Endothelial cell of umbilical vein (primary cell): ENCODE measurements at regions of chr2 and their contacts with region 1.

Region 1: DNA sequence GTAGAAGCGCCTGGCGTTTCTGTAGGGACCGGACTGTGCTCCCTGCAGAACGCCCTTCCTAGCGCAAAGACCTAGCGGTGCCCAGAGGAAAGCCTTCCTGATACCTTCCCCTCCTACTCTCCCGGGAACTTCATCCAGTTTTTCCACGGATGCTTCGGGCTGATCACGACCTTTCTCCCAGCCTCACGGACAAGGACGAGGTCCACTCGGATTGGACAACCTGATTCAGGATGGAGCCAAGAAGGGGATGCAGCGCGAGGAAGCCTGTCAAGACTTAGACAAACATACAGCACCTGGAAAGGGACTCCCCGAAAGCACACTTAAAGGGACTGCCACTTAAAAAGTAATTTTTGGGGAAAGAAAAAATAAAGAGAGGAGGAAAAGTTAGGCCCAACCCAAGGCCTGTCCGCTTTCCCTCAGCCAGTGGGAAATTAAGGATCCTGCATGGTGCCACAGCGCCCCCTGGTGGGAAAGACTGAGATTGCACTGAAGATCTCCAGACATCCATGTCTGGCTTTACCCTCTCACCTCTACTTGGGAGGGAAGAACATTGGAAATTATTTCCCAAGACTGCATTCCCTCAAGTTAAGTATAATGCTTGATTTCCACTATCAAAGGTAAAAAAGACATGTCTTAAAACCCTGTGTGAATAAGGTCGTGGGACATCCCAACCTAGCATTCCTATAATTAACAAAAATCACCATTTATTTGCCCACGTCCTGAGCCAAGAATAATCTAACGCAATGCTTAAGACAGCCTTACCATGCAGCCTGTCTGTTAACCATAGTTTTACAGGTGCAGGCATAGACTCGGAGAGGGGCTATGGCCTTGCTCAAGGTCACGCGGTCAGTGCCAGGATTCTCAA is 13.4 kb upstream of the COPS8 start:
- DNase-seq: peak; percentile 72
- H3K4me3 ChIP-seq: no peak overlapping the region
- H3K27ac ChIP-seq: no peak overlapping the region
- H3K4me1 ChIP-seq: peaks cover 38% of the 10 kb centered on the region
- H3K27me3 ChIP-seq: no peaks in the 10 kb centered on the region
- CTCF ChIP-seq: peak; percentile 88
- POLR2A ChIP-seq: no peak

Region 2: GRCh38 chr2:236309669-236310029 is 762.6 kb before region 1 on chr2:
- CTCF ChIA-PET with region 1: interaction called, 20 read pairs
- POLR2A ChIA-PET with region 1: no interaction called
- dilution Hi-C with region 1: no loop called
- intact Hi-C with region 1: loop called (anchors 1 kb)
- DNase-seq: peak; percentile 39
- H3K4me3 ChIP-seq: no peak overlapping the region
- H3K27ac ChIP-seq: no peak overlapping the region
- H3K4me1 ChIP-seq: no peaks in the 10 kb centered on the region
- H3K27me3 ChIP-seq: no peaks in the 10 kb centered on the region
- CTCF ChIP-seq: peak; percentile 61 to 76
- POLR2A ChIP-seq: no peak

Region 3: GRCh38 chr2:236343400-236344161 is 728.7 kb before region 1 on chr2:
- CTCF ChIA-PET with region 1: interaction called, 16 read pairs
- POLR2A ChIA-PET with region 1: no interaction called
- dilution Hi-C with region 1: loop called (anchors 10 kb)
- intact Hi-C with region 1: loop called (anchors 1 kb)
- DNase-seq: peak; percentile 65
- H3K4me3 ChIP-seq: no peak overlapping the region
- H3K27ac ChIP-seq: no peak overlapping the region
- H3K4me1 ChIP-seq: no peaks in the 10 kb centered on the region
- H3K27me3 ChIP-seq: no peaks in the 10 kb centered on the region
- CTCF ChIP-seq: peak; percentile 72 to 78
- POLR2A ChIP-seq: no peak

Region 4: GRCh38 chr2:236352761-236353593 is 719.3 kb before region 1 on chr2:
- CTCF ChIA-PET with region 1: interaction called, 19 read pairs
- POLR2A ChIA-PET with region 1: no interaction called
- dilution Hi-C with region 1: loop called (anchors 10 kb)
- intact Hi-C with region 1: loop called (anchors 1 kb)
- DNase-seq: peak; percentile 44
- H3K4me3 ChIP-seq: no peak overlapping the region
- H3K27ac ChIP-seq: no peak overlapping the region
- H3K4me1 ChIP-seq: no peaks in the 10 kb centered on the region
- H3K27me3 ChIP-seq: no peaks in the 10 kb centered on the region
- CTCF ChIP-seq: peak; percentile 60 to 61
- POLR2A ChIP-seq: no peak

Region 5: GRCh38 chr2:236512902-236513435 is 559.3 kb before region 1 on chr2:
- CTCF ChIA-PET with region 1: interaction called, 17 read pairs
- POLR2A ChIA-PET with region 1: no interaction called
- dilution Hi-C with region 1: no loop called
- intact Hi-C with region 1: no loop called
- DNase-seq: peak; percentile 42
- H3K4me3 ChIP-seq: no peak overlapping the region
- H3K27ac ChIP-seq: no peak overlapping the region
- H3K4me1 ChIP-seq: peaks cover 18% of the 10 kb centered on the region
- H3K27me3 ChIP-seq: no peaks in the 10 kb centered on the region
- CTCF ChIP-seq: peak; percentile 77 to 78
- POLR2A ChIP-seq: no peak

Region 6: DNA sequence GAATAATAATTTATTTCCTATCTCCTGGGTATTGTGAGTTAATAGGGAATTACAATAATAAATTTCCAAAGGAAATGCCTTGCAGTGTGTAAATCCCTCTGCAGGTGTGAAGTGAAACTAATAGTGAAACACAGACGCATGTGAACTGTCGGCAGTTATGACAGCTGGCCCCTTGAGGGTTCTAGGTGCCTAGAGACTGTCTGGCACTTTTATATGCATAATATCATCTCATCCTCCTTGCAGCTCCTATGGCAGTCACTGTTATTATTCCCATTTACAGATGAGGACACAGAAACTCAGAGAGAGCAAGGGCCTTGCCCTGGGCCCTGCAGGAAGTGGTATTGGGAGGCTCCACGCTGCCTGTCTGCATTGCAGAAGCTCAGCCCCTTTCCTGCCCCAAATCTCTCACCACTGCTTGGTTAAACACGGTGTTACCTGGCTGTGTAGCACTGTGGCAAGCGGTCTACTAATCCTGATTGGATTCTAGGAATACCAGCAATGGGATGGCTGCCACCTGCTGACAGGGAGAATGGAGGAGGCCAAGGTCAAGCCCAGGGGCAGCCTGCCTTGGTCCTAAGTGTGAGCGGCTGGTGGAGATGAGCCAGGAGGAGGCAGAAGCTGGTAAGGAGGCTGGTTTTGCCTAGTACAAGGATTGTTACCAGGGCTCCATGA is 535.4 kb before region 1 on chr2:
- CTCF ChIA-PET with region 1: no interaction called
- POLR2A ChIA-PET with region 1: no interaction called
- dilution Hi-C with region 1: no loop called
- intact Hi-C with region 1: loop called (anchors 1 kb)
- DNase-seq: no peak
- H3K4me3 ChIP-seq: no peak overlapping the region
- H3K27ac ChIP-seq: no peak overlapping the region
- H3K4me1 ChIP-seq: peaks cover 12% of the 10 kb centered on the region
- H3K27me3 ChIP-seq: no peaks in the 10 kb centered on the region
- CTCF ChIP-seq: no peak
- POLR2A ChIP-seq: no peak

Region 7: DNA sequence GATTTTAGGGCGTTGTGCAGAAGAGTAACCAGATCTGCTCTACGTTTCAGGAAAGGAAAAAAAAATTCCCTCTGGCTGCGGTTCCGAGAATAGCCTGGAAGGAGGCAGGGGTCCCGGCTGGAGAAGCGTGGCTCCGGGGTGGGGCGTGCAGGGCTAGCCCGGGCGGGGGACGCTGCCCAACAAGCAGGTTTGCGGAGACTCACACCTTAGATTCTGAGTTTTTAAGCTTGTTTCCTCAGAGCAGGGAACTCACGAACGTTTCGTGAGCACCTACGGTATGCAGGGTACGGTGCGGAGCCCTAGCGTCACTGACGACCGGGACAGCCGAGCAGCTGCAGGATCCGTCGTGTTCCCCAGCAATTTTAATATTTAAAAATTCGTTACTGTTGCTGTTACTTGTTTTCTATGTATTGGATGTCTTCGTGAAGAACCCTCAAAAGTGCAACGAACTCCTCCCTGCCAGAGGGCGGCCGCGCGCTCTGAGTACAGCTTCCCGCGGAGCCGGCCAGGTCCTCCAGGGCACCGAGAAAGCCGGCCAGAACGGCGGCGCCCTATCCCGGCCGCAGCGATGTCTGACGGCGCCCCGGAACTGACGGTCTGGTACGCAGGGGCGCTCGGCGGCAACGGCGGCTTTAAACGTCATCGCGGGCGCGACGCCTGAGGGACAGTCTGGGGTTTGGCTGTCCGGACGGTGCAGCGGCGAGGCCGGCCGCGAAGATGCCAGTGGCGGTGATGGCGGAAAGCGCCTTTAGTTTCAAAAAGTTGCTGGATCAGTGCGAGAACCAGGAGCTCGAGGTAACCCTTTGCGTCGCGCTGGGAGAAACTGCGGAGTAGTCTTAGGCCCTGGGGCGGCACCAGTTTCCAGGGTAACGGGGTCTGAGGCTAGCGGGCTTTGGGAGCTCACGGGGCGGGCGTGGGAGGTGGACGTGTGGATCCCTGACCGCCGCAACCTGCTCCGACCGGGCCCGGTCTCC is 13.2 kb after region 1 on chr2 and contains the start of gene COPS8:
- CTCF ChIA-PET with region 1: interaction called, 33 read pairs
- POLR2A ChIA-PET with region 1: no interaction called
- dilution Hi-C with region 1: no loop called
- intact Hi-C with region 1: loop called (anchors 1 kb)
- DNase-seq: peak; percentile 94
- H3K4me3 ChIP-seq: peak within 1 kb of the TSS; percentile 52 to 92 (median 75)
- H3K27ac ChIP-seq: peak within 1 kb of the TSS; percentile 94
- H3K4me1 ChIP-seq: peaks cover 22% of the 10 kb centered on the region
- H3K27me3 ChIP-seq: no peaks in the 10 kb centered on the region
- CTCF ChIP-seq: peak in 1 of 2 donors; percentile 9
- POLR2A ChIP-seq: peak; percentile 83
- total RNA-seq, gene COPS8: 71.4 and 80.7 TPM in 2 replicates